Activated CD4-positive, alpha-beta T cell treated with anti-CD3 and anti-CD28 coated beads, Interleukin-2, amount 10 ng/mL, durations not matched to agents 24 days and 14 days (primary cell): ENCODE measurements at regions of chr18 and their contacts with region 1.

Region 1: GRCh38 chr18:24368749-24369148 is 28.9 kb downstream of the OSBPL1A start:
- DNase-seq: peak; percentile 78
- H3K4me3 Mint-ChIP-seq: peak overlapping the region; percentile 28
- H3K27ac Mint-ChIP-seq: peak overlapping the region; percentile 75
- H3K4me1 Mint-ChIP-seq: peaks cover 39% of the 10 kb centered on the region
- H3K27me3 Mint-ChIP-seq: no peaks in the 10 kb centered on the region

Region 2: DNA sequence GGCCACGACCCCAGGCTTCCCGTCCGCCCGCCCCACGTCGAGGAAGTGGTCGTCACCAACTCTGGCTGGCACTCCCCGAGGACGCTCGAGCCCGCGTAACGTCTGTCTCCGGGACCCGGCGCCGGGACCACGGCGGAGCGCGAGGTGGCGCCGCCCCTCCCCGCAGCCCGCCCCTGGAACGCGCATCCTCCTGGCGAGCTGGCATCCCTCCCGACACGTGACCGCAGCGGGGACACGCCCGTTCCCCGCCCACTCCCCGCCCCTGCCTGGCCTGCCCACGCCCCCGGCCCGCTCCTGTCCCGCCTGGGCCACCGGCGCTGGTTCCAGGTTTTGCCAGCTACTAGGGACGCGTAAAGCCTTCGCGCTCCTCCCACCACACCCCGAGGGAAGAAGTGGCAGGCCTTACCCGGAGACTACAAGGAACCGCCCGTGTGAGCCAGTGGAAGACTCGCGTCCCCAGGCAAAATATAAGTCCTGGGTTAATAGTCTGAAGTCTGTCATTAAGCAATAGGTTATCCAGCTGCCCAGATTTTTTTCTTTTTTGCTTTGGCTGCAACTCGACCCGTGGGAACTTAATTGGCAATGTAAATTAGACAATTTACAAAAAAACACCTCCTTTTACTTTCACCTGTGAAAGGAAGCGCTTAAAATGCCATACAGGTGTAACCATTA is 29.1 kb after region 1 on chr18 and contains the start of gene OSBPL1A:
- intact Hi-C with region 1: loop called (anchors 1 kb)
- DNase-seq: peak; percentile 89
- H3K4me3 Mint-ChIP-seq: peak within 1 kb of the TSS; percentile 77
- H3K27ac Mint-ChIP-seq: peak within 1 kb of the TSS; percentile 39
- H3K4me1 Mint-ChIP-seq: peaks cover 19% of the 10 kb centered on the region
- H3K27me3 Mint-ChIP-seq: peaks cover 27% of the 10 kb centered on the region
- total RNA-seq, gene OSBPL1A: 3.1 and 3.5 TPM in 2 replicates

Region 3: GRCh38 chr18:24862201-24862816 is 493.6 kb after region 1 on chr18:
- intact Hi-C with region 1: no loop called
- DNase-seq: no peak
- H3K4me3 Mint-ChIP-seq: no peak overlapping the region
- H3K27ac Mint-ChIP-seq: no peak overlapping the region
- H3K4me1 Mint-ChIP-seq: no peaks in the 10 kb centered on the region
- H3K27me3 Mint-ChIP-seq: no peaks in the 10 kb centered on the region